CD14-positive monocyte (primary cell): ENCODE measurements at regions of chr20 and their contacts with region 1.

Region 1: DNA sequence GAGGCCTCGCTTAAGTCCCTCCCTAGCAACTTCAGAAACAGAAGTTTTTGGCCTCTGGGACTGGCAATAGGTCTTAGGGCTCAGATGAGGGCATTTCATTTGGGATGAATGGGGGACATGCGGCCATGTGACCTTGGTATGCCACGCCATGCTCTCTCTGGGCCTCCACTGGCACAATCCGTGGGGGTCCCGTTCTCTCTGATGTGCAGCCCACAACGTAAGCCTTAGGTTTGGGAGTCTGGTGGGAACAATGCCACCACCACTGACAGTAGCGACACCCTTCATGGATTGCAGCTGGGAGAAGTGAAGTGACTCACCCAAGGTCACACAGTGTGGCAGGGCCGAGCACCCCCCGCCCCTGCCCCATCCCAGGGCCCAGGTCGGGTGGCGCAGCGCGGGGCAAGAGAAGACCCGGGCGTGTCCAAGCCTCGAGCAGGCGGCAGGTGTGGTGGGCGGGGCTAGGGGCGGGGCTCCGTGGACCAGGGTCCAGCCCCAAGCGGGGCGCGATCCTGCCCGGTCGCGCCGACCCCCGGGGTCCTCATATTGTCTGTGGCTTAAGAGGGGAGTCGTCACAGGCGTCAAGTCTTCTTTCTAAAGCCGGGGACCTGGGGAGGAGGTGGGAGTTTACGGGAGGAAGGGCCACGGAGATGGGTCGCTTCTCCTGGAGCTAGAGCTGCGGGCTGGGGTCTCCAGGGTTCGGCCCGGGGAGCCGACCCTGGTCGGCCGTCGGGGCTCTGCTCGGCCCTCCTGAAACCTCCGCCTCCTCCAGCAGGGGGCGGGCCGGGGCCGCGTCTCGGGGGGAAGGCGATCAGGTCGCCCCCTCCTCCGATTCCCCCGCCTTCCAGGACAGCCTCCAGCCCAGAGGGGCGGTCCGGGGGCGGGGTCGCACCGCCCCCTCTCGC is 698 bp upstream of the CEBPB start:
- DNase-seq: peak; percentile 79 to 90 (median 89)
- H3K4me3 ChIP-seq: peak overlapping the region in 2 of 3 experiments; percentile 22 to 96
- H3K4me3 Mint-ChIP-seq: peak overlapping the region; percentile 72 to 74
- H3K27ac ChIP-seq: peak overlapping the region; percentile 57 to 90
- H3K27ac Mint-ChIP-seq: peak overlapping the region; percentile 83 to 94 (median 86)
- H3K4me1 ChIP-seq: peaks cover 61 to 63% of the 10 kb centered on the region in 2 donors
- H3K4me1 Mint-ChIP-seq: peaks cover 48% of the 10 kb centered on the region
- H3K27me3 ChIP-seq: no peaks in the 10 kb centered on the region
- H3K27me3 Mint-ChIP-seq: peaks cover 3 to 10% (median 3%) of the 10 kb centered on the region in 3 donors
- CTCF ChIP-seq: peak; percentile 87

Region 2: GRCh38 chr20:50224531-50225255 is 34.8 kb after region 1 on chr20:
- intact Hi-C with region 1: loop called (anchors 2 to 5 kb)
- DNase-seq: peak; percentile 53 to 89 (median 54)
- H3K4me3 ChIP-seq: no peak overlapping the region
- H3K4me3 Mint-ChIP-seq: no peak overlapping the region
- H3K27ac ChIP-seq: peak overlapping the region; percentile 88 to 97
- H3K27ac Mint-ChIP-seq: peak overlapping the region; percentile 74 to 99 (median 97)
- H3K4me1 ChIP-seq: peaks cover 99 to 100% of the 10 kb centered on the region in 2 donors
- H3K4me1 Mint-ChIP-seq: peaks cover 94% of the 10 kb centered on the region
- H3K27me3 ChIP-seq: no peaks in the 10 kb centered on the region
- H3K27me3 Mint-ChIP-seq: no peaks in the 10 kb centered on the region
- CTCF ChIP-seq: no peak

Region 3: GRCh38 chr20:50274570-50275430 is 84.9 kb after region 1 on chr20:
- intact Hi-C with region 1: loop called (anchors 2 to 5 kb)
- DNase-seq: peak; percentile 99 to 100 (median 100)
- H3K4me3 ChIP-seq: peak overlapping the region in 1 of 3 experiments; percentile 76
- H3K4me3 Mint-ChIP-seq: peak overlapping the region; percentile 91 to 99
- H3K27ac ChIP-seq: peak overlapping the region; percentile 99
- H3K27ac Mint-ChIP-seq: peak overlapping the region; percentile 99 to 100 (median 100)
- H3K4me1 ChIP-seq: peaks cover 97 to 98% of the 10 kb centered on the region in 2 donors
- H3K4me1 Mint-ChIP-seq: peaks cover 96% of the 10 kb centered on the region
- H3K27me3 ChIP-seq: no peaks in the 10 kb centered on the region
- H3K27me3 Mint-ChIP-seq: no peaks in the 10 kb centered on the region
- CTCF ChIP-seq: no peak

Region 4: GRCh38 chr20:50346372-50347283 is 156.7 kb after region 1 on chr20:
- intact Hi-C with region 1: loop called (anchors 2 to 5 kb)
- DNase-seq: peak; percentile 47 to 58 (median 51)
- H3K4me3 ChIP-seq: peak overlapping the region in 1 of 3 experiments; percentile 51
- H3K4me3 Mint-ChIP-seq: peak overlapping the region; percentile 67 to 84
- H3K27ac ChIP-seq: peak overlapping the region; percentile 84 to 94
- H3K27ac Mint-ChIP-seq: peak overlapping the region; percentile 97 to 99 (median 98)
- H3K4me1 ChIP-seq: peaks cover 76 to 82% of the 10 kb centered on the region in 2 donors
- H3K4me1 Mint-ChIP-seq: peaks cover 78% of the 10 kb centered on the region
- H3K27me3 ChIP-seq: no peaks in the 10 kb centered on the region
- H3K27me3 Mint-ChIP-seq: peaks cover 1 to 6% (median 4%) of the 10 kb centered on the region in 3 donors
- CTCF ChIP-seq: no peak

Region 5: DNA sequence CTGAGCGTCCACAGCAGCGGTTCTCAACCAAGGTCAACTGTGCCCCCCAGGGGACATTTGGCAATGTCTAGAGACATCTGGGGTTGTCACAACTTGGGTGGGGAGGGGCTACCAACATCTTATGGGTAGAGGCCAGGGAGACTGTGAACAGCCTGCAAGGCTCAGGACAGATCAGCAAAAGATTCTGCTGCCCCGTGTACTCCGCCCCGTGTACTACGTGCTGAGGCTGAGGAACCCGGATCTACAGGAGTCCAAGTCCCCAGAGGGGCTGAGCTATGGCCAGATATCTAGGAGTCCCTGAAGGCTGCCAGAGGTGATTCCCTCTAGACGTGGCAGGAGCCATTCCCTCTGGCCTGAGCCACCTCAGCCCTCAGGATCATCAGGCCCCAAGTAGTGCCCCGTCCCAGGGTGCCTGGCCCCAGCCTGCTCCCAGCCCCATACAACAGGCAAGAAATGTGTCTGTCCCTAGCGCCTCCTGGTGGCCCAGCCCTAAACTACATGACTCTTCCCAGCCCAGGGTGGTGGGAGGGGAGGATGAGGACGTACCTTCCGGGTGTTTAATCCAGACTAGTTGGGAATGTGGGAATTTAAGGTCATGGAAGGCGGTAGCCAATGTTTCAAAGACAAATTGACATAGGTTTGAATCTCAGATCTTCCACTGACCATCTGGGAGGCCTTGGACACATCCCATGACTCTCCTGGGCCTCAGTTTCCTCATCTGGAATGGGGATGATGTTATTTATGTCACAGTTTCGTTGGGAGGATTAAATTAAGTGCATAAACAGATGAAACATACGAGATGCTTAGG is 270.7 kb after region 1 on chr20:
- intact Hi-C with region 1: loop called (anchors 2 kb)
- DNase-seq: peak; percentile 76 to 85 (median 82)
- H3K4me3 ChIP-seq: no peak overlapping the region
- H3K4me3 Mint-ChIP-seq: peak overlapping the region in 1 of 2 donors; percentile 53
- H3K27ac ChIP-seq: peak overlapping the region in 1 of 2 donors; percentile 34
- H3K27ac Mint-ChIP-seq: peak overlapping the region; percentile 58 to 81 (median 73)
- H3K4me1 ChIP-seq: peaks cover 50 to 54% of the 10 kb centered on the region in 2 donors
- H3K4me1 Mint-ChIP-seq: peaks cover 60% of the 10 kb centered on the region
- H3K27me3 ChIP-seq: no peaks in the 10 kb centered on the region
- H3K27me3 Mint-ChIP-seq: peaks cover 0 to 3% (median 2%) of the 10 kb centered on the region in 3 donors
- CTCF ChIP-seq: peak; percentile 95

Region 6: DNA sequence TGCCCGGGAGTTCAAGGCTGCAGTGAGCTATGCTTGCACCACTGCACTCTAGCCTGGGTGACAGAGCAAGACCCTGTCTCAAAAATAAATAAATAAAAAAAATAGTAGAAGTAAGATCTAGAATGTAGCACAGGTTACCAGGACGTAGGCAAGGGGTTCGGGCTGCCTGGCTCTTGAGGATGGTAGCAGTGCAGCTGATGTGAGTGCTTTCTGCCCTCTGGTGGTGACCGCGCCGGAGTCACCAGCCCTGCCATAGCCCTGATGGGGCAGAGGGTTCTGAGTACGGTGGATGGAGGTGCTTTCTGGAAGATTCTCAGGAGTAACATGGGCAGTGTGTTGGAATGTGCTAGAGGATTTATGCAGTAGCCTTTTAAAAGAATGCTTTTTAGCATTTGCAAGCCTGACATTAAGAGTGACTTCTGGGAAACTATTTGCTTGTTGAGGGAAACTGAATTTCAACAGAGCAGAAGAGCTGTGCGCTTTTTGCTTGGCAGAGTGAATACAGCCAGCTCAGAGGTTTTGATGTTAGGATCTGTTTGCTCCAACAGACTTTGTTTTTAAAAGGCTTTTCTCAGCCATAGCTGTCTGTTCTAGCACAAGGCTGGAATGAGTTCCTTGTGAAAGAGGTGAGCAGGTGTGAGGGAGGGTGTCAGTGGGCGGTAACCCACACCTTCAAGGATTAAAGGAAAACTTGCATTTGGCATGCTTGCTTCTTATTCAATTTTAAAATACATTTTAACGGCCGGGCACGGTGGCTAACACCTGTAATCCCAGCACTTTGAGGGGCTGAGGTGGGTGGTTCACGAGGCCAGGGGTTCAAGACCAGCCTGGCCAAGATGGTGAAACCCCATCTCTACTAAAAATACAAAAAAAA is 386.2 kb after region 1 on chr20:
- intact Hi-C with region 1: loop called (anchors 2 to 5 kb)
- DNase-seq: peak; percentile 34 to 49 (median 43)
- H3K4me3 ChIP-seq: no peak overlapping the region
- H3K4me3 Mint-ChIP-seq: no peak overlapping the region
- H3K27ac ChIP-seq: no peak overlapping the region
- H3K27ac Mint-ChIP-seq: peak overlapping the region in 4 of 7 donors; percentile 7 to 81 (median 28)
- H3K4me1 ChIP-seq: peaks cover 0 to 6% of the 10 kb centered on the region in 2 donors
- H3K4me1 Mint-ChIP-seq: peaks cover 17% of the 10 kb centered on the region
- H3K27me3 ChIP-seq: no peaks in the 10 kb centered on the region
- H3K27me3 Mint-ChIP-seq: no peaks in the 10 kb centered on the region
- CTCF ChIP-seq: peak; percentile 71